ENCODE measurements at regions of chr4 and their contacts with region 1.

Region 1: DNA sequence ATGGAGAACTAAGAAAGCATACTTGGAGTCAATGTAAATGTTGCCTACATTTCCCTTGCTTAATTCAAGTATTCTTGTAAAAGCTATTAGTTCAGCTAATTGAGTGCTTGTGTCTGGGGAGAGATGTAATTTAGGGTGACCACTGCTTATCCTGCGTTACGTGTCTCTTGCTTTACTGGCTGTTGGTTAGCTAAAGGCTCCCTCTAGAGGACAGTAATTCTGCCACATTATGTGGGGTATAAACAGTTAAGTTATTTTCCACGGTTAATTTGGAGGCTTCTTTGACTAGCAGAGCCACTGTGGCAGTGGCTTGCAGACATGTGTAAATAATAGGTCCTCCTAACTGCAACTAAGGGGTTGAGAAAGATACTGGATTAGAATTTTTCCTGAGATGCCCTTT is 25.3 kb upstream of the NAF1 start:
- DNase-seq: no peak
- H3K4me3 ChIP-seq: no peak overlapping the region
- H3K27ac ChIP-seq: no peak overlapping the region
- H3K4me1 ChIP-seq: no peaks in the 10 kb centered on the region
- H3K27me3 ChIP-seq: no peaks in the 10 kb centered on the region
- CTCF ChIP-seq: no peak

Region 2: GRCh38 chr4:163107754-163108153 is 84.2 kb before region 1 on chr4:
- intact Hi-C with region 1: loop called (anchors 5 kb)
- DNase-seq: no peak
- H3K4me3 ChIP-seq: no peak overlapping the region
- H3K27ac ChIP-seq: no peak overlapping the region
- H3K4me1 ChIP-seq: no peaks in the 10 kb centered on the region
- H3K27me3 ChIP-seq: no peaks in the 10 kb centered on the region
- CTCF ChIP-seq: no peak